Calu3 (cell line): ENCODE measurements at regions of chr1 and their contacts with region 1.

Region 1: DNA sequence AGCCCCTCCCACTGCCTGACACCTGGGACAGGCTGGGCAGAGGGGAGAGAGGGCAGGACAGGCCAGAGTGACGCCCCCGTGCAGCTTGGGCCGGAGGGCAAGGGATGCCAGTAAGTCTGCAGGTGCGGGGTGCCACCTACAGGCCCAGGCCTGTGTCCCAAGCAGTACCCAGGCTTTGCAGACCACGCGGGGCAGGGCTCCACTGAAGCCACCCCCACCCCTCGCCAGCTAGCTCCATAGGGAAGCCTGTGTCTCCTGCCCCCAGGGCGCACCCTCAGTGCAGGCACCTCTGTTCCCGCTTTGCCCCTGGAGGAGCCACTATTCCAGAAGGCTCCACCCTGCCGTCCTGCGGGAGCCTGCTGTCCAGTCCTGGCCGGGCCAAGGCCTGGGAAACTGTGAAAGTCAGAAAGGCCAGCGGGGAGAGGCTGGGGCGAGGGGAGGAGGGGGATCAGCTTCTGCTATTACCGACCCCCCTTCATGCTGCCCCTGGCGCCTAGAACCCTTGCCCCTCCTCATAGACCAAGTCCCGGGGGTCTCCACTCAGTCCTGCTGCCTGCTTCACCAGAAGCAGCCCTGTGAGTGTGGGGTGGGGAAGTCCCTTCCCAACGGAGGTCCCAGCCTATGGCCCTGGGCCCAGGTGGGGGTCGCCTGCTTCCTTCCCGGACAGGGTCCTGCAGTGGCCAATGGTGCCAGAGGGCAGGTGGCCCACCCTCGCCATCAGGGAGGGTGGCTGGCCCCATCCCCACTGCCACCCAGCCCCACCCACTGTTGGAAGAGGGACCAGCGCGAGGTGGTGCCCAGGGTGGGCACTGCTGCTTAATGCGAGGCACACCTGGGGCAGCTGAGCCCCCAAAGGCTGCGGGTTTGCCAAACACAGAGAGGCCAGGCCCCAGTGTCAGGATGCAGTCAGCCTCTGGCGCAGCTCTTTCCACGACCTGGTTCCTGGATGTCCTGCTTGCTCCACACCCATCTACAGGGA is 54.4 kb downstream of the KCNAB2 start:
- DNase-seq: peak; percentile 33
- H3K4me3 Mint-ChIP-seq: no peak overlapping the region
- H3K27ac Mint-ChIP-seq: no peak overlapping the region
- H3K4me1 Mint-ChIP-seq: no peaks in the 10 kb centered on the region
- H3K27me3 Mint-ChIP-seq: peaks cover 44% of the 10 kb centered on the region
- CTCF ChIP-seq: no peak

Region 2: DNA sequence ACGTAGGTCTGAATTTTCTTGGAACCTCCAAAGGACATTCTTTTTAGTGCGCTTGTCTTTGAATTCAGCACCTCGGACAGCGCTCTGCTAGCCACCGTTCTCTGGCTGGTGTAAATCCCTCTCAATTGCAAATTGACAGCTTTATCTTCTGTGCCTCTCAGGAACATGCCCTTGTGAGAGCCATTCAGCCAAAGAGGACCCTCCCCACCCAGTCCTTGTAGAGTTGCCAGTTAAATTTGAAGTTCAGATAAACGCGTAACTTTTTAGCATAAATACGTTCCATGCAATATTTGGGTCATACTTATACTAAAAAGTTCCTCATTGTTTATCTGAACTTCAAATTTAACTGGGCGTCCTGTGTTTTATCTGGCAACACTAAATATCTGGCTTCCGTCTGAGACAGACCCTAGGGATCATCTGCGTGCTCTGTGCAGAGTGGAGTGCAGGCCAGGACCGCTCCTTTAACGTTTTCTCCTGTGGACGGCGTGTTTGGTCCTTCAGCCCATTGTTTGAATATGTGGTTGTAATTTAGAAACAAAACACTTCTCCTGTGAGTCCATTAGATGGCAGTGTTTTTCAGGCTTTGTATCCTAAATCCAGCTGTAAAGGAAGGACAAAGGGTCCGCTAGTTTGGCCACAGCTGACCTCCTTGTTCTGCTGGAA is 47.4 kb before region 1 on chr1:
- CTCF ChIA-PET with region 1: interaction called, 4 read pairs
- intact Hi-C with region 1: loop called (anchors 1 kb)
- DNase-seq: peak; percentile 54
- H3K4me3 Mint-ChIP-seq: no peak overlapping the region
- H3K27ac Mint-ChIP-seq: no peak overlapping the region
- H3K4me1 Mint-ChIP-seq: peaks cover 7% of the 10 kb centered on the region
- H3K27me3 Mint-ChIP-seq: peaks cover 34% of the 10 kb centered on the region
- CTCF ChIP-seq: peak; percentile 36

Region 3: GRCh38 chr1:6086762-6087376 is 13.2 kb before region 1 on chr1:
- CTCF ChIA-PET with region 1: no interaction called
- intact Hi-C with region 1: no loop called
- DNase-seq: no peak
- H3K4me3 Mint-ChIP-seq: no peak overlapping the region
- H3K27ac Mint-ChIP-seq: no peak overlapping the region
- H3K4me1 Mint-ChIP-seq: no peaks in the 10 kb centered on the region
- H3K27me3 Mint-ChIP-seq: peaks cover 48% of the 10 kb centered on the region
- CTCF ChIP-seq: no peak